ENCODE measurements at regions of chr1 and their contacts with region 1.

Region 1: DNA sequence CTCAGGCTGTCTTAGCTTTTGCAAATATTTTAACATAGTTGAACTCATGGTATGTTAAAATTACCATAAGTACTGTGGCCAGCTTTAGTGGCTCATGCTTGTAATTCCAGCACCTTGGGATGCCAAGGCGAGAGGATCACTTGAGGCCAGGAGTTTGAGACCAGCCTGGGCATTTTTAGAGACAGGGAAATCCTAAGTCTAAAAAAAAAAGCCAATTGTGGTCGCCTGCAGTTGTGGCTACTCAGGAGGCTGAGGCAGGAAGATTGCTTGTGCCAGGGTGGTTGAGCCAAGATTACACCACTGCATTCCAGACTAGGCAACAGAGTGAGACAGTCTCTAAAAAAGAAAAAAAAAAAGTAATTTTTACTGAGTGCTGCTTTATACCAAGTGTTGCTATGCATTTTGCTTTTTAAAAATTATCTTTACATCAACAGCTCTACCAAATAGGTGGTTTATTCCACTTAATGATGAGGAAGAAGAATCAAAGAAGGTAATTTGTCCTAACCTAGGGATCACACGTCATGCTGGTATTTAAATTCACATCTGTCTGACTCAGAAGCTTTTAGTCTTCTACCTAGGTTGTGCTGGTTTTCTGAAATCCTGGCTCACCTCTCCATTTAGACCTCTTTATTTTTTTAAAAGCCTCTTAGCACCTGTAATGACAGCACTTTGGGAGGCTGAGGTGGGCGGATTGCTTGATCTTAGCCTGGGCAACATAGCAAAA is 16.8 kb downstream of the PPP1R12B start:
- DNase-seq: peak; percentile 51
- H3K4me3 ChIP-seq: no peak overlapping the region
- CTCF ChIP-seq: no peak

Region 2: DNA sequence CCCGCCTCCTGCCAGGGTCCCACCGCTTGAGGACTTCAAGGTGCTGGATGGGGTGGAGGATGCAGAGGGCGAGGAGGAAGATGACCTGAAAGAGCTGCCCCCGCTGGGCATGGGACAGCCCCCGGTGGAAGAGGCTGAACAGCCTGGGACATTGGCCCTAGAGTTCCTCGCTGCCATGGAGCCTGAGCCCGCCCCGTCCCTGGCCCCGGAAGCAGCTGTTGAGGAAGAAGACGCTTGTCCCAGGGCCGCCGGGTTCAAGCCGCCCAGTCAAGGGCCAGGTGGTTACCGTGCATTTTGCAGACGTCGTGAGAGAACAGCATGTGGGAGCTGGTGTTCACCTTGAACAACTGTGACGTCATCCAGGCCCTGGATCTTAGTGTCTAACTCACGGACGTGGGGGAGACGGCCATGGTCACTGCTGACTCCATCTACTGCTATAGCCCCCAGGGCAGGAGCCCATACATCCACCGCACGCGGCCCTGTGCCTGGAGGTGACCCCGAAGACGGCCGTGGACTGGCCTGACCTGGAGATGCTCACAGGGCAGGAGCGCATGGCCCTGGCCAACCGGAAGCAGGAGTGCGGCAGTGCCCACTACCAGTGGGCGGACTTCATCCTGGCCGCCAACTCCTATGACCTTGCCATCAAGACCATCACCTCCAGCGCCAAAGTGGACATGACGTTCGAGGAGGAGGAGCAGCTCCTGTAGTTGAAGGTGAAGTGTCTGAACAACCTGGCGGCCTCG is 73.3 kb after region 1 on chr1:
- in situ Hi-C with region 1: loop called (anchors 10 kb)
- DNase-seq: no peak
- H3K4me3 ChIP-seq: no peak overlapping the region
- CTCF ChIP-seq: no peak

Measured in astrocyte of the cerebellum (primary cell).